HAP-1 (cell line): ENCODE measurements at regions of chr10 and their contacts with region 1.

Region 1: GRCh38 chr10:117174439-117175214 is 22.7 kb upstream of the KCNK18 start:
- DNase-seq: peak; percentile 76 to 92
- H3K4me3 ChIP-seq: peak overlapping the region; percentile 23
- H3K4me1 ChIP-seq: peaks cover 11% of the 10 kb centered on the region
- H3K27me3 ChIP-seq: peaks cover 10% of the 10 kb centered on the region; the same call in 1 of the 2 replicates

Region 2: DNA sequence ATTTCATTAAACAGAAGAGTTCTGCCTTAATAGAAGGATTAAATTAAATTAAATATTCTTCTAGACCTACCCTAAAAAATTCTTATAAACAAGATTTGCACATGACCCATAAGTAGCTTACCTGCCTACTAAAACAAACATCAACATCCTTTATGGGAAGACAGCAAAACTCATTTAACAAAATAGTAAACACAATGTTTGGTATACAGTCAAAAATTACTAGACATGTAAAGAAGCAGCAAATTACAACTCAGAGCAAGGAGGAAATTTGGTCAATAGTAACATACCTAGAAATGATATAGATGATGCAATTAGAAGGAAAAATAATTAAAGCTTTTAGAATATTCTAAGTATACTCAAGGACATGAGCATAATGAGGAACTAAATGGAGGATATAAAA is 822.5 kb before region 1 on chr10:
- in situ Hi-C with region 1: no loop called
- DNase-seq: no peak
- H3K4me3 ChIP-seq: no peak overlapping the region
- H3K4me1 ChIP-seq: no peaks in the 10 kb centered on the region
- H3K27me3 ChIP-seq: no peaks in the 10 kb centered on the region

Region 3: GRCh38 chr10:116688241-116688711 is 486.4 kb before region 1 on chr10:
- in situ Hi-C with region 1: loop called (anchors 10 kb)
- DNase-seq: no peak
- H3K4me3 ChIP-seq: no peak overlapping the region
- H3K4me1 ChIP-seq: no peaks in the 10 kb centered on the region
- H3K27me3 ChIP-seq: no peaks in the 10 kb centered on the region

Region 4: DNA sequence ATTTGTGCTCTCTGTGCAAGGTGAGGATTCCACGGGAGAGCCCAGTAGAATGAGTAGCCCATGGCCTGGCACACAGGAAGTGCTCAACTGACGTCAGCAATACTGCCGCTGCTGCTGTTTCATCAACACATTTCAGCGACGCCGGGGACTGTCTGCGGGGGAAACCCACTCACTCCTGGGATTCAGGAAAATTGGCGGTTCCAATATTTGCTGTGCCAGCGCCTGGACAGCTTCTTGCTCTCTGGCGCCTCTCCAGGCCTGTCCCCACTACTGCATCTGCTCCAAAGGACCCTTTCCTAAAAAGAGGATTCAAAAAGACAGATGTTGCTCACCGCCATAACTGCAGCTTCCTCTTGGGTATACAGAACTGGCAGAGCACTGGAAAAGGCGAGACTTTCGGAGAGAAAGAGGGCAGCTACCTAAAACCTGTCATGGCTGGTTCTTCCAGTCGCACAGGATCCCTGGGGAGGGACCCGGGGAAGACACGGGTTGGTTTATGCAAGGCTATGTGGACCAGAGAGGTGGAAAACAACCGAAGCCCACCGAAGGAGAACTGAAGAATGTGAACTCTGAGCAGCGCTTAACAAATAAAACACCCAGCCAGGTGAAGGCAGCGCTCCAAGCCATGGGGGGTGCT is 365.0 kb before region 1 on chr10:
- in situ Hi-C with region 1: loop called (anchors 5 kb)
- DNase-seq: peak; percentile 40 to 68
- H3K4me3 ChIP-seq: no peak overlapping the region
- H3K4me1 ChIP-seq: no peaks in the 10 kb centered on the region
- H3K27me3 ChIP-seq: no peaks in the 10 kb centered on the region